Endothelial cell of umbilical vein (primary cell): ENCODE measurements at regions of chr3 and their contacts with region 1.

Region 1: GRCh38 chr3:124786441-124787241 is 56.4 kb downstream of the UMPS start:
- DNase-seq: peak; percentile 50
- H3K4me3 ChIP-seq: no peak overlapping the region
- H3K27ac ChIP-seq: no peak overlapping the region
- H3K4me1 ChIP-seq: peaks cover 6% of the 10 kb centered on the region
- H3K27me3 ChIP-seq: no peaks in the 10 kb centered on the region
- CTCF ChIP-seq: no peak
- POLR2A ChIP-seq: no peak

Region 2: DNA sequence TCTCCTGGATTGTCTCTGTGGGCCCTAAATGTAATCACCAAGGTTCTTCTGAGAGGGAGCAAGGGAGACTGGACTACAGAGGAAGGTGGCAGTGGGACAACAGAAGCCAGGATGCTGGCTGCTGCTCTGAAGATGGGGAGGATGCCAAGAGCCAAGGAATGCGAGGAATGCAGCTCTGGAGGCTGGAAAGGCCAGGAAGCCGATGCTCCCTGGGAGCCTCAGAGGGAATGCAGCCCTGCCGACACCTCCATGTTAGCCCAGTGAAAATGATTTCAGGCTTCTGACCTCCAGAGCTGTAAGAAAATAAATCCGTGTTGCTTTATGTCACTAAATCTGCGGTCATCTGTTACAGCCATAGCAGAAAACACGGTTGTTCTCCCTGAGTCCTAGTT is 12.3 kb before region 1 on chr3:
- CTCF ChIA-PET with region 1: interaction called, 46 read pairs
- POLR2A ChIA-PET with region 1: no interaction called
- dilution Hi-C with region 1: no loop called
- intact Hi-C with region 1: no loop called
- DNase-seq: peak; percentile 64
- H3K4me3 ChIP-seq: no peak overlapping the region
- H3K27ac ChIP-seq: peak overlapping the region; percentile 70
- H3K4me1 ChIP-seq: peaks cover 63% of the 10 kb centered on the region
- H3K27me3 ChIP-seq: no peaks in the 10 kb centered on the region
- CTCF ChIP-seq: no peak
- POLR2A ChIP-seq: no peak

Region 3: DNA sequence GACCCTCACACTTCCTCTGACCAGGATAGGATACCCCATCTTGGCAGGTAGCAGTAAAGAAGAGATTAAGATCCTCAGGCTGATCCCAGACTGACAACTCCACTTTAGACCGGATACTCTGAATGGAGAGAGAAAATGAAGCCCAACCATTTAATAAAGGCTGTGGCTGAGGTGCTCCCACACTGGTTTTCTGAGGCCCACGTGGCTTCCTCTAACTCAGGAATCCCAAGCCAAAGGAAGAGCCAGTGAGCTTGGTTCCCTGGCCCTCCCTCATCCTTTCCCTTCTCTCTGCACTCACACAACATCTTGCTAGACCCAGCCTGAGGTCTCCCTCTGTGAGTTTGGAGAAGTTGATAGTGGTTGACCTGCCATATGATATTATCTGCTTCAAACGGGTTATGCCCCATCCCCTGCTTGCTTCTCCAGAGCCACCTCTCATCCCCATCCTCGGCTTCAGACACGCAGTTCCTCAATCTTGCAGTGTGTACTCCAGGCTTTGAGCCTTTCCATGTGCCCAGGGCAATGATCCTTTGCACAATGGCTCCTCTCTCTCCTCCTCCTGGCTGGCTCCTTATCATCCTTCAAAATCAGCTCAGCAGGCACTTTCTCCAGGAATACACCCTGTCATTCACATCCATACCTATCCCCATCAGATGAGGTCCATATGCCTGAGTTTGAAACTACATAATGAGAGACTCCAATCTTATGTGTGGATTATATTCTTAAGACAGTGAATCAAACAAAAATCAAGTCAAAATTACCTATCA is 22.6 kb after region 1 on chr3:
- CTCF ChIA-PET with region 1: interaction called, 14 read pairs
- POLR2A ChIA-PET with region 1: no interaction called
- dilution Hi-C with region 1: no loop called
- intact Hi-C with region 1: no loop called
- DNase-seq: no peak
- H3K4me3 ChIP-seq: no peak overlapping the region
- H3K27ac ChIP-seq: no peak overlapping the region
- H3K4me1 ChIP-seq: peaks cover 2% of the 10 kb centered on the region
- H3K27me3 ChIP-seq: no peaks in the 10 kb centered on the region
- CTCF ChIP-seq: no peak
- POLR2A ChIP-seq: no peak

Region 4: GRCh38 chr3:124834723-124835718 is 48.4 kb after region 1 on chr3:
- CTCF ChIA-PET with region 1: interaction called, 28 read pairs
- POLR2A ChIA-PET with region 1: no interaction called
- dilution Hi-C with region 1: no loop called
- intact Hi-C with region 1: loop called (anchors 5 kb)
- DNase-seq: peak; percentile 90
- H3K4me3 ChIP-seq: no peak overlapping the region
- H3K27ac ChIP-seq: peak overlapping the region; percentile 25
- H3K4me1 ChIP-seq: peaks cover 44% of the 10 kb centered on the region
- H3K27me3 ChIP-seq: no peaks in the 10 kb centered on the region
- CTCF ChIP-seq: no peak
- POLR2A ChIP-seq: no peak

Region 5: DNA sequence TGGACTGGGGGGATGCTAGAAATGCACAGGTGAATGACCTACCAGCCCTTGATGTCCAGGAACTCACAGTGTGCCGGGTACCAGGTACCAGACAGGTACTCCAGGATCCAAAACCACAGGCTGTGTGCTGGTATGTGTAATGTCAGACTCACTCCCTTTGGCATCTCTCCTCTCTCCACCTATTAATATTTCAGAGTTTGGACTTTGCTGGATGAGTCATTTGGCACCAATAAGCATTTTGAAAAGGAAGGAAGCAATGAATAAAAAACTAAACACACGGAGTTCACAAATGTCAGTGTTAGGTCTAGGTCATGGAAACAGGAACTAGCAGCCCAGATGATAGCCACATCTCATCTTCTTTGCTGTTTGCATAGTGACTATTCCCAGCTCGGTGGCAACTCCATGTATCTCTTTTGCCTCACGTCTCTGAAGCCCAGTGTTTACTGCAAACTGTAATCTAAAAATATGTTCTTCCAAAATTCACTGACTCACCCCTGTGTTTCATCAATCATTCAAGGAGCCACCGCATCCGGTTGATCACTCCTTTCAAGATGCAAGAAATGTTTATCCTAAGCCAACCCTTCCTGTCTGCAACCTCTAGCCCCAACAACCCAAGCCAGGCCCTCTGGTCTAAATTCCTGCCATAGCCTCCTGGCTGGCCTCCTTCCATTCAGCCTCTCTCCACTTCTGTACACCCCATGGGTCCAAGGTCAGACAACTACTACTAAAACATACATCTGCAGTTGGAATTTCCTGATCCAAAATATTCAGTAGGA is 92.1 kb after region 1 on chr3:
- CTCF ChIA-PET with region 1: interaction called, 10 read pairs
- POLR2A ChIA-PET with region 1: no interaction called
- dilution Hi-C with region 1: no loop called
- intact Hi-C with region 1: no loop called
- DNase-seq: peak; percentile 94
- H3K4me3 ChIP-seq: no peak overlapping the region
- H3K27ac ChIP-seq: peak overlapping the region; percentile 91
- H3K4me1 ChIP-seq: peaks cover 34% of the 10 kb centered on the region
- H3K27me3 ChIP-seq: no peaks in the 10 kb centered on the region
- CTCF ChIP-seq: no peak
- POLR2A ChIP-seq: peak; percentile 57

Region 6: DNA sequence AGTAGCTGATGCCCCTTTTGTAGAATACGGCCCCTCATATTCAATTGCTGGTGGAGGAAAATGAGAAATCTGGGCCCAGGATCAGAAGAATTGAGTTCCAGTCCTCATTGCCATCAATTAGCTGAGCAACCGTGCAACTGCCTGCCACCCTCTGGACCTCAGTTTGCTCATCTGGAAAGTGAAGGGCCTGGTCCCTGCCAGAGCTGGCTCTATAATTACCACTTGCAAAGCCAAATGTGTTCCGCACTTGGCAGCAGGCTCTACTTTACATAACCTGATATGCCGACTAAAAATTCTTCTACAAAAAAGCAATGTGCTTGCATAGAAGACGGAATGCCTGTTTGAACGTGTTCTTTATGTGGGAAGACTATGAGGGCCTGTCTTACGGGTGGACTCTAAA is 109.1 kb after region 1 on chr3:
- CTCF ChIA-PET with region 1: interaction called, 289 read pairs
- POLR2A ChIA-PET with region 1: no interaction called
- dilution Hi-C with region 1: no loop called
- intact Hi-C with region 1: no loop called
- DNase-seq: no peak
- H3K4me3 ChIP-seq: no peak overlapping the region
- H3K27ac ChIP-seq: no peak overlapping the region
- H3K4me1 ChIP-seq: no peaks in the 10 kb centered on the region
- H3K27me3 ChIP-seq: no peaks in the 10 kb centered on the region
- CTCF ChIP-seq: no peak
- POLR2A ChIP-seq: no peak

Region 7: DNA sequence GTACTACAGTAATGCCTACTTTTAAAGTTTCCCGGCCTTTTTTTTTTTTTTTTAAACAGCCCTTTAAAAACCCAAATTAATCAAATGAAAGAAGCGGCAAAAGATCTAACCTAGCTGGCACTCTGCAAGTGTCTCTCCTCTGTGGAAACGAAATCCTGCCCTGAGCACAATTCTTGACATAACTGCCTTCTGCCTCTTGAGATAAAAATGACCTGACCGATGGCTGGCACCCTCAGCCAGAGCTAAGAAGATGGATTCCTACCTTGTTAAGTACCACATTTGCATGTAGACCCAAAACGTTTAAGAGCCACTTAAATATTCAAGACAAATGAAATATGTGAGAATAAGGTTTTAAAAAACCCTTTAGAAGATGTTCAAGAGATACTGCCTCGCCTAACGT is 442.5 kb after region 1 on chr3:
- CTCF ChIA-PET with region 1: no interaction called
- POLR2A ChIA-PET with region 1: no interaction called
- dilution Hi-C with region 1: no loop called
- intact Hi-C with region 1: no loop called
- DNase-seq: no peak
- H3K4me3 ChIP-seq: no peak overlapping the region
- H3K27ac ChIP-seq: no peak overlapping the region
- H3K4me1 ChIP-seq: peaks cover 19% of the 10 kb centered on the region
- H3K27me3 ChIP-seq: no peaks in the 10 kb centered on the region
- CTCF ChIP-seq: no peak
- POLR2A ChIP-seq: no peak